Aorta (tissue), 5 donors: ENCODE measurements at regions of chr3 and their contacts with region 1.

Region 1: GRCh38 chr3:136196401-136197158 is 445 bp upstream of the MSL2 start:
- DNase-seq: peak; percentile 100
- ATAC-seq: peak; percentile 96
- H3K4me3 ChIP-seq: peak overlapping the region; percentile 55 to 88
- H3K27ac ChIP-seq: peak overlapping the region; percentile 83 to 94
- H3K4me1 ChIP-seq: peaks cover 2 to 7% of the 10 kb centered on the region in 2 donors
- H3K27me3 ChIP-seq: no peaks in the 10 kb centered on the region

Region 2: GRCh38 chr3:135965506-135966270 is 230.9 kb before region 1 on chr3 and contains the start of gene PPP2R3A:
- intact Hi-C with region 1: loop called in 1 of 2 experiments (anchors 1 kb)
- DNase-seq: peak; percentile 89 to 95
- ATAC-seq: peak; percentile 98
- H3K4me3 ChIP-seq: peak within 1 kb of the TSS; percentile 79 to 91
- H3K27ac ChIP-seq: peak within 1 kb of the TSS; percentile 73 to 91
- H3K4me1 ChIP-seq: peaks cover 6 to 7% of the 10 kb centered on the region in 2 donors
- H3K27me3 ChIP-seq: no peaks in the 10 kb centered on the region
- total RNA-seq, gene PPP2R3A: 15.6 to 19.6 TPM

Region 3: GRCh38 chr3:136075218-136075808 is 121.3 kb before region 1 on chr3:
- intact Hi-C with region 1: loop called in 1 of 2 experiments (anchors 10 kb)
- DNase-seq: peak; percentile 71 to 79
- ATAC-seq: peak; percentile 87
- H3K4me3 ChIP-seq: no peak overlapping the region
- H3K27ac ChIP-seq: no peak overlapping the region
- H3K4me1 ChIP-seq: peaks cover 0 to 3% of the 10 kb centered on the region in 2 donors
- H3K27me3 ChIP-seq: no peaks in the 10 kb centered on the region

Region 4: GRCh38 chr3:136142592-136142991 is 54.0 kb before region 1 on chr3:
- intact Hi-C with region 1: loop called (anchors 5 kb)
- DNase-seq: no peak
- ATAC-seq: peak; percentile 51
- H3K4me3 ChIP-seq: no peak overlapping the region
- H3K27ac ChIP-seq: peak overlapping the region in 1 of 2 donors; percentile 88
- H3K4me1 ChIP-seq: peaks cover 4 to 11% of the 10 kb centered on the region in 2 donors
- H3K27me3 ChIP-seq: no peaks in the 10 kb centered on the region

Region 5: DNA sequence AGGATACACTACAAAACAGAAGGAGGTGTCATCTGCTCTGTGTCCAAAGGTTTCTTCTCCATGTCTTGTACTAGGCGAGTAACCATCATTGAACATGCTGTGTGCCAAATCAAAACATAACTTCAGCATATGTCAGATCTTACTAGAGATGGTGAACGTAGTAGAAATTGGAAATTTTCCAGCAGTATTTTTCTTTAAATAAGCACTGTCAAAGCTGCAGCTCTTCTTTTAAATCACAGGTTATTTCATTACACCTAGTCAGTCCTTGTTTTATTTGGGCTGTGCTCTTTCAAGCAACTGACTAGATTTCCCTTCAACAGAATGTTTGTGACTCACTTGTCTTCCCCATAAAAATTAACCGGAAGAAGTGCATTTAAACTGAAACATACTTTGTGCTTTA is 46.9 kb before region 1 on chr3:
- intact Hi-C with region 1: loop called (anchors 5 kb)
- DNase-seq: no peak
- ATAC-seq: no peak
- H3K4me3 ChIP-seq: no peak overlapping the region
- H3K27ac ChIP-seq: no peak overlapping the region
- H3K4me1 ChIP-seq: peaks cover 1 to 2% of the 10 kb centered on the region in 2 donors
- H3K27me3 ChIP-seq: no peaks in the 10 kb centered on the region

Region 6: GRCh38 chr3:136162322-136162721 is 34.3 kb before region 1 on chr3:
- intact Hi-C with region 1: no loop called
- DNase-seq: no peak
- ATAC-seq: no peak
- H3K4me3 ChIP-seq: no peak overlapping the region
- H3K27ac ChIP-seq: no peak overlapping the region
- H3K4me1 ChIP-seq: no peaks in the 10 kb centered on the region
- H3K27me3 ChIP-seq: no peaks in the 10 kb centered on the region

Region 7: GRCh38 chr3:136237961-136238649 is 41.5 kb after region 1 on chr3:
- intact Hi-C with region 1: no loop called
- DNase-seq: no peak
- ATAC-seq: no peak
- H3K4me3 ChIP-seq: no peak overlapping the region
- H3K27ac ChIP-seq: no peak overlapping the region
- H3K4me1 ChIP-seq: no peaks in the 10 kb centered on the region
- H3K27me3 ChIP-seq: no peaks in the 10 kb centered on the region

Region 8: GRCh38 chr3:136250226-136250902 is 53.8 kb after region 1 on chr3 and contains the start of gene PCCB:
- intact Hi-C with region 1: loop called (anchors 1 to 5 kb)
- DNase-seq: peak; percentile 97 to 98
- ATAC-seq: peak; percentile 98
- H3K4me3 ChIP-seq: peak within 1 kb of the TSS; percentile 19 to 79
- H3K27ac ChIP-seq: peak within 1 kb of the TSS in 1 of 2 donors; percentile 49
- H3K4me1 ChIP-seq: no peaks in the 10 kb centered on the region
- H3K27me3 ChIP-seq: no peaks in the 10 kb centered on the region
- total RNA-seq, gene PCCB: 16.4 to 18.7 TPM